Calu3 (cell line): ENCODE measurements at regions of chr6 and their contacts with region 1.

Region 1: DNA sequence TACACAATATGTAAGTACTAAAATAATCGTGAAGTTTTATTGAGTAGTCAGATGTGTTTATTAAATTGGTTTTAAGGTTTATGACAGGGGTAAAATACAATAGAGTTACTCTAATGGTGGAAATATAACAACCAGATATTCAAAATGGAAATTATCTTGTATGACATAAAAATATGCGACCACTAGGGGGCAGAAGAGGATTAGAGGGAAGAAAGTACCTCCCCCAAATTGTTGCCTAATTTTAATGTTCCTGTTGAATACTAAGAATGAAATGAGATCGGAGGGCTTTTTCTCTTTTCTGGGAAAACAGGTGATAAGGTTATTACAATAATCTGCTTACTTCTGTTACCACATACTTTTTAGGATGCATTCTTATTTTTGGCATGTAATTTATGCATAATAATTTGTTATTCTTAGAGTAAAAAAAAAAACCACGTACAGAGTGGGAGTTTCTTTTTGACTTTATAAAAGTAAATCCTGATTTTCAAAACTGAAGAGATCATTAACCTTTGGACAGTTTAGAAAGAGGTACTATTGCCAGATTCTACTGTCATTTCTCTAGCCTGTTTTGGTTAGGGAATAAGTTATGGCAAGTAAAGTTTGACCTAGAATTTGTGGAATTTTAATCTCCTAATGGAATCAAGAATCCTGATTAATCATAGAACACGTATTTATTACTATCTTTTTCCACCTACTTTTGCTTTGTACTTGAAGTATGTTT is 159.2 kb downstream of the CD109 start:
- DNase-seq: peak; percentile 49
- H3K4me3 Mint-ChIP-seq: no peak overlapping the region
- H3K27ac Mint-ChIP-seq: no peak overlapping the region
- H3K4me1 Mint-ChIP-seq: no peaks in the 10 kb centered on the region
- H3K27me3 Mint-ChIP-seq: no peaks in the 10 kb centered on the region
- CTCF ChIP-seq: peak; percentile 69

Region 2: DNA sequence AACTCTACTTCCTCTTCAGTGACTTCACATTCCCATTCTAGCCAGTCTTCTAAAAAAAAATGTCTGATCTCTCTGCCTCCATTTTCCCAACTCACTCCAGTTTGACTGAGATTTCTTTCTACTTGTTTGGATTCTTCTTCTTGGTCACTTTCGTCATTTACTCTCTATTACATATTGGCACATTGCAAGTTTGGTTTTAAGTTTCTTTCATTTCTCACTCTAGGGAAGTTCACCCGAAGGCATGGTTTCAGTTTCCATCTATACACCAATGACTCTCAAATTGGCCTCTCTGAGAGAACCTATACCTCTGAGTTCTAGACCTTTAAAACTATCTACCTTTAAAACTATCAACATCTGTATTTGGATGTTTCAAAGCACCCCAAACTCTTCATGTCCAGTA is 107.9 kb before region 1 on chr6:
- CTCF ChIA-PET with region 1: no interaction called
- intact Hi-C with region 1: loop called (anchors 10 kb)
- DNase-seq: no peak
- H3K4me3 Mint-ChIP-seq: no peak overlapping the region
- H3K27ac Mint-ChIP-seq: no peak overlapping the region
- H3K4me1 Mint-ChIP-seq: no peaks in the 10 kb centered on the region
- H3K27me3 Mint-ChIP-seq: no peaks in the 10 kb centered on the region
- CTCF ChIP-seq: no peak

Region 3: GRCh38 chr6:73898624-73899023 is 43.5 kb after region 1 on chr6:
- CTCF ChIA-PET with region 1: no interaction called
- intact Hi-C with region 1: loop called (anchors 2 kb)
- DNase-seq: no peak
- H3K4me3 Mint-ChIP-seq: no peak overlapping the region
- H3K27ac Mint-ChIP-seq: no peak overlapping the region
- H3K4me1 Mint-ChIP-seq: no peaks in the 10 kb centered on the region
- H3K27me3 Mint-ChIP-seq: no peaks in the 10 kb centered on the region
- CTCF ChIP-seq: no peak

Region 4: DNA sequence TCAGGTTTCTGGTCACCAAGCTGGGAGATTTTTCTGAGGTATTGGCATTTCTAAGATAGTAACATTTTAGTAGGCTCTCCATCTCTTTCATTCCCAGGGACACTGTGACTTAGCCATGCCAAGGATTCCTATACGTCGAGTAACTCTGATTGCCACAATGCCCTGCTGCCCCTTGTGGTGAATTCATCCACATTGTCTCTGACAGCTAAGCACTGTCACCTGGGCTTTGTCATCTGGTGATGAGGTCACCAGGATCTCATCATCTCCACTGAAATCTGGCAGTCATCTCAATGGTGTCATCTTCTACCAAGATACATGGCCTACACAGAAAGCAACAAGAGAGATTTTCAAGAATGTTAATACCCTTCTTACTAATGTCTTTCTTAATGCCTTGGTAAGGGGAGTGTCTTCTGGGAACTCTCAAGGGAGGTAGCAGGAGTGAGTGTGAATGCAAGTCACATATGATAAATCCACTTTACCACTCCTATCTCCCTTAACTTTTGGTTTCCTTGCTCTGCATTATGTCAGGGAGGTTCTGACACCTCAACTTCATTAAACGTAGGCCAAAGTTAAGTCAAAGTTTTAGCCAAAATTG is 87.5 kb after region 1 on chr6:
- CTCF ChIA-PET with region 1: no interaction called
- intact Hi-C with region 1: loop called (anchors 5 kb)
- DNase-seq: peak; percentile 9
- H3K4me3 Mint-ChIP-seq: no peak overlapping the region
- H3K27ac Mint-ChIP-seq: no peak overlapping the region
- H3K4me1 Mint-ChIP-seq: no peaks in the 10 kb centered on the region
- H3K27me3 Mint-ChIP-seq: no peaks in the 10 kb centered on the region
- CTCF ChIP-seq: peak; percentile 17

Region 5: GRCh38 chr6:73969971-73970970 is 115.1 kb after region 1 on chr6:
- CTCF ChIA-PET with region 1: no interaction called
- intact Hi-C with region 1: loop called (anchors 5 kb)
- DNase-seq: peak; percentile 20
- H3K4me3 Mint-ChIP-seq: no peak overlapping the region
- H3K27ac Mint-ChIP-seq: no peak overlapping the region
- H3K4me1 Mint-ChIP-seq: no peaks in the 10 kb centered on the region
- H3K27me3 Mint-ChIP-seq: no peaks in the 10 kb centered on the region
- CTCF ChIP-seq: peak; percentile 33